Calu3 (cell line): ENCODE measurements at regions of chr5 and their contacts with region 1.

Region 1: GRCh38 chr5:170216266-170216864 is 16.4 kb upstream of the C5orf58 start:
- DNase-seq: peak; percentile 67
- H3K4me3 Mint-ChIP-seq: no peak overlapping the region
- H3K27ac Mint-ChIP-seq: no peak overlapping the region
- H3K4me1 Mint-ChIP-seq: no peaks in the 10 kb centered on the region
- H3K27me3 Mint-ChIP-seq: no peaks in the 10 kb centered on the region
- CTCF ChIP-seq: peak; percentile 77

Region 2: GRCh38 chr5:169970911-169971765 is 245.2 kb before region 1 on chr5:
- CTCF ChIA-PET with region 1: interaction called, 10 read pairs
- intact Hi-C with region 1: no loop called
- DNase-seq: peak; percentile 29
- H3K4me3 Mint-ChIP-seq: no peak overlapping the region
- H3K27ac Mint-ChIP-seq: no peak overlapping the region
- H3K4me1 Mint-ChIP-seq: peaks cover 9% of the 10 kb centered on the region
- H3K27me3 Mint-ChIP-seq: peaks cover 96% of the 10 kb centered on the region
- CTCF ChIP-seq: no peak

Region 3: DNA sequence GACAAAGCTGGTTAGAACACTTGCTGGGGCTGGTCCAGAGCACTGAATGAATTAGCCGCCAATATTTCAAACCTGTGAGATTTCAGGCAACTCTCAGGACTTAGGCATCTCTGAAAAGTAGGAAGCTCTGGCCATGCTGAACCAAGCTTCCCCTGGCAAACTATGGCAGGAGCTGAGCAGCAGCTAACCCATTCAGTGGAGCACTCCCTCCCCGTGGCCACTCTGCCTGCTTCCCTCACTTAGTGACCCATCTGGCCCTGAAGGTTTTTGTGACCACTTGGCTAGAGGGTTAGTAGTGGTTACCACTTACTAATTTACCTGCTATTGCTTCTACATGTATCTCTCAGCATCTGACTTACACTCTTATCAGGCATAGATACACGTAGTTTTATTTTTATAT is 85.1 kb before region 1 on chr5:
- CTCF ChIA-PET with region 1: no interaction called
- intact Hi-C with region 1: no loop called
- DNase-seq: no peak
- H3K4me3 Mint-ChIP-seq: no peak overlapping the region
- H3K27ac Mint-ChIP-seq: no peak overlapping the region
- H3K4me1 Mint-ChIP-seq: peaks cover 31% of the 10 kb centered on the region
- H3K27me3 Mint-ChIP-seq: no peaks in the 10 kb centered on the region
- CTCF ChIP-seq: no peak

Region 4: GRCh38 chr5:170183816-170184687 is 32.3 kb before region 1 on chr5:
- CTCF ChIA-PET with region 1: interaction called, 21 read pairs
- intact Hi-C with region 1: loop called (anchors 1 kb)
- DNase-seq: peak; percentile 90
- H3K4me3 Mint-ChIP-seq: no peak overlapping the region
- H3K27ac Mint-ChIP-seq: no peak overlapping the region
- H3K4me1 Mint-ChIP-seq: no peaks in the 10 kb centered on the region
- H3K27me3 Mint-ChIP-seq: peaks cover 48% of the 10 kb centered on the region
- CTCF ChIP-seq: peak; percentile 93